ENCODE measurements at regions of chr1 and their contacts with region 1.

Region 1: DNA sequence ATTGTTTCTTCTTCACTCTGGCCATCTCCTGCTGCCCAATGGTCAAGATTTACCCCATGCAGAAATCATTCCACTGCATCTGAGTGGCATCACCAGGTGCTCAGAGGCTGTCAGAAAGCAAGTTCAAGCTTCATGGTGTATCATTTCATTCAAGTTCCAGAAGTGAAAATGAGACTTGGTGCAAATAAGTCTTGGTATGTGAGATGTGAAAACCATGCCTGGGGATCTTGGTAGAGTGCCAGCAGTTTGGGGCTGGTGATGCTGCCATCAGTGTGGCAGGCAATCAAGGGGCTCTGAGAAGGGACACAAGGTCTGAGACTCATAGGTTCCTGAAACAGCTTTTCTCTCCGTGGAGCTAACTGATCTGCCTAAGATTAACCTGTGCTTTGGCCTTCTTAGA is 52.0 kb downstream of the CD2 start:
- DNase-seq: peak; percentile 52
- H3K4me3 Mint-ChIP-seq: peak overlapping the region; percentile 42
- H3K27ac Mint-ChIP-seq: peak overlapping the region; percentile 90
- H3K4me1 Mint-ChIP-seq: peaks cover 92% of the 10 kb centered on the region
- H3K27me3 Mint-ChIP-seq: no peaks in the 10 kb centered on the region

Region 2: GRCh38 chr1:116817582-116818064 is 11.4 kb after region 1 on chr1:
- CTCF ChIA-PET with region 1: interaction called, 13 read pairs
- POLR2A ChIA-PET with region 1: interaction called, 7 read pairs
- DNase-seq: peak; percentile 80
- H3K4me3 Mint-ChIP-seq: peak overlapping the region; percentile 27
- H3K27ac Mint-ChIP-seq: peak overlapping the region; percentile 90
- H3K4me1 Mint-ChIP-seq: peaks cover 62% of the 10 kb centered on the region
- H3K27me3 Mint-ChIP-seq: no peaks in the 10 kb centered on the region

Measured in activated CD4-positive, alpha-beta T cell treated with anti-CD3 and anti-CD28 coated beads, Interleukin-2, amount 10 ng/mL, durations not matched to agents 7 days and 5 days (primary cell).